Activated CD4-positive, alpha-beta T cell treated with anti-CD3 and anti-CD28 coated beads, Interleukin-2, amount 10 ng/mL, durations not matched to agents 24 days and 14 days (primary cell): ENCODE measurements at regions of chr12 and their contacts with region 1.

Region 1: GRCh38 chr12:109713187-109713984 is at the start of gene FAM222A:
- DNase-seq: peak; percentile 99
- H3K4me3 Mint-ChIP-seq: peak within 1 kb of the TSS; percentile 67
- H3K27ac Mint-ChIP-seq: no peak within 1 kb of the TSS
- H3K4me1 Mint-ChIP-seq: no peaks in the 10 kb centered on the region
- H3K27me3 Mint-ChIP-seq: peaks cover 53% of the 10 kb centered on the region
- total RNA-seq, gene FAM222A: 1.3 and 1.5 TPM in 2 replicates

Region 2: DNA sequence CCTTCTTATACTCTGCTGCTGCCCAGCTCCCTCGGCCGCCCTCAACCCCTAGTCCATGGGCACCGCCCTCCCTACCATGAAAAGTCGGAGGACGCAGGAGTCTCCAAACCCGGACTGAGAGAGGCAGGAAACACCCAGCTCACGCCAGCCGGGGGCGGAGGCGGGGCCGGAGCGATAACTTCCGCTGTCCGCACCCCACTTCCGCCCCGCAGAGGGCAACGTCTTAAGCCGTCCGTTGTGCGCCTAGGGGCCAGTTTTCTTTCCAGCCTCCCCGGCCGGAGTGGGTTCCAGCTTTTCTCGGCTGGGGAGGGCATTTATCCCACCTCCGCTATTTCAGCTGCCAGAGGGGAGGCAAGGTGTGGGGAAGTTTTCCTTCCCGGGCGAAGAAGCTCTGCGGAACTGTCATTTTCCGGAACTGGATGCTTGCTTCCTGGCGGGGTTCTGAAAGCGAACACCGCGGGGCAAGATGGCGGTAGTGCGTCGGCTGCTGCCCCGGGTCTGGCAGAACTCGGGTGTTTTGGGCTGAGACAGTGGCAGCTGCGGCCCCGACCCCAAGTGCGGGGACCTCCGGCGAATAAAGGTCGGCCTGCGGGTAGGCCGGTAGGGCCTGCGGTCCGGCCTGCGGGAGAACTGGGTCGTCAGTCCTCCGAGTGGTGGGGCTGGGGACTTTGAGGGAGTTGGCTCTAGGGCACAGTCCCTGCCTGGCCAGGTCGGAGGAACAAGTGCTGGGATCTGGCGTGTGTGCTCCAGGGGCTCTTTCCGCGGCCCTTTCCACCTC is 236.0 kb before region 1 on chr12 and contains the starts of genes KCTD10 and UBE3B:
- intact Hi-C with region 1: loop called (anchors 1 kb)
- DNase-seq: peak; percentile 97
- H3K4me3 Mint-ChIP-seq: peak within 1 kb of the TSS; percentile 94
- H3K27ac Mint-ChIP-seq: peak within 1 kb of the TSS; percentile 99
- H3K4me1 Mint-ChIP-seq: peaks cover 30% of the 10 kb centered on the region
- H3K27me3 Mint-ChIP-seq: peaks cover 2% of the 10 kb centered on the region
- total RNA-seq, gene KCTD10: 47.5 and 48.5 TPM in 2 replicates
- total RNA-seq, gene UBE3B: 28.9 and 32.2 TPM in 2 replicates